Activated naive CD4-positive, alpha-beta T cell treated with anti-CD3 and anti-CD28 coated beads, Interleukin-2, amount 10 ng/mL, durations not matched to agents 7 days and 5 days (primary cell): ENCODE measurements at regions of chr4 and their contacts with region 1.

Region 1: DNA sequence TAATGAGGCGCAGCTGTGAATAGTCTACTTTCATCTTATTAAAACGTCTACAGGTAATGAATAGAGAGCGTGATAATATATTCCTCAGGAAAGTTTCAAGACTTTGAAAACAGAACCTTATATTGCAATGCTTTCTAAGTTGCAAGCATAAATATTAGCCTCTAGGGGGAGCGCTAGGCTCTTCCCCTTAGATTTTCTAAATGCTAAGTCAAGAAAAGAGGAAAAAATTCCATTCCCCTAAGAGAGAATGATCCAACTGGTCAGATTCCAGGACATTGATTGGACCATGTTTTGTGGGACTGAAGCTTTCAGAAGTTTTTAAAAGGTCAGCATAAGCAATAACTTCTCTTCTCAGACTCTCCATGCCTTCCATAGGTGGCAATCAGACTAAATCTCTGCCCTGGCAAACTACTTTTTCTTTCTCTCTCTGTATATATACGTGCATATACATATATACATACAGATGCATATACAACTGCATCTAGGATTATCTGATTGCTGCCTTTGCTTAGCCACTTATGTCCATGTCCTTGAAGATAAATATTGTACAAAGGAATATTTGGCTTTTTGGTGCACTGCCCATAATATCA is 492.9 kb downstream of the INPP4B start:
- DNase-seq: no peak
- H3K4me3 Mint-ChIP-seq: peak overlapping the region; percentile 35
- H3K27ac Mint-ChIP-seq: peak overlapping the region; percentile 77
- H3K4me1 Mint-ChIP-seq: peaks cover 92% of the 10 kb centered on the region
- H3K27me3 Mint-ChIP-seq: no peaks in the 10 kb centered on the region

Region 2: GRCh38 chr4:141939361-141939760 is 413.9 kb before region 1 on chr4:
- CTCF ChIA-PET with region 1: no interaction called
- DNase-seq: no peak
- H3K4me3 Mint-ChIP-seq: no peak overlapping the region
- H3K27ac Mint-ChIP-seq: no peak overlapping the region
- H3K4me1 Mint-ChIP-seq: no peaks in the 10 kb centered on the region
- H3K27me3 Mint-ChIP-seq: no peaks in the 10 kb centered on the region

Region 3: GRCh38 chr4:142230991-142231390 is 122.3 kb before region 1 on chr4:
- CTCF ChIA-PET with region 1: no interaction called
- DNase-seq: no peak
- H3K4me3 Mint-ChIP-seq: no peak overlapping the region
- H3K27ac Mint-ChIP-seq: peak overlapping the region; percentile 37
- H3K4me1 Mint-ChIP-seq: no peaks in the 10 kb centered on the region
- H3K27me3 Mint-ChIP-seq: no peaks in the 10 kb centered on the region

Region 4: DNA sequence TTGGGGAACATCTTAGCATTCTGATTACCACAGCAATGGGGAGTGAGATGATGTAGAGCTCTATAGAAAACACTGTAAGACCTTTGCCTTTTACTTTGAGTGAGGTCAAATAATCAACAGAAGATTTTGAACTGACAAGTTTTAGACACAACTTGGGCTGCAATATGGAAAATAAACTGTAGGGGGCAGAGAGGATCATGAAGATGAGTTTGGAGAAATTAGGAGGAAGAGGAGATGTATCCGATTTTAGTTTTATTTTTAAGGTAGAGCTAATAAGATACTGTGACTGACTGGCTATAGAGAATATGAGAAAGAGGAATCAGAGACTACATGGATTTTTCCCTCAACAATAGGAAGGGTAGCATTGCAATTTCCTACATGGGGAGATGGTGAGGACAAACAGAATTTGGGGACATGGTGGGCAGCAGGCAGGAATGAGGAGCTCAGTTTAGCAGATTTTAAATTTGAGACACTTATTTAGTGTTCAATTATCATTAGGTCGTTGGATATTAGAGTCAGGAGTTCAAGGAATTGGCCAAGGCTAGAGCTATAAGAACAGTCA is 70.3 kb before region 1 on chr4:
- CTCF ChIA-PET with region 1: interaction called, 18 read pairs
- DNase-seq: peak; percentile 27
- H3K4me3 Mint-ChIP-seq: no peak overlapping the region
- H3K27ac Mint-ChIP-seq: no peak overlapping the region
- H3K4me1 Mint-ChIP-seq: peaks cover 10% of the 10 kb centered on the region
- H3K27me3 Mint-ChIP-seq: no peaks in the 10 kb centered on the region

Region 5: DNA sequence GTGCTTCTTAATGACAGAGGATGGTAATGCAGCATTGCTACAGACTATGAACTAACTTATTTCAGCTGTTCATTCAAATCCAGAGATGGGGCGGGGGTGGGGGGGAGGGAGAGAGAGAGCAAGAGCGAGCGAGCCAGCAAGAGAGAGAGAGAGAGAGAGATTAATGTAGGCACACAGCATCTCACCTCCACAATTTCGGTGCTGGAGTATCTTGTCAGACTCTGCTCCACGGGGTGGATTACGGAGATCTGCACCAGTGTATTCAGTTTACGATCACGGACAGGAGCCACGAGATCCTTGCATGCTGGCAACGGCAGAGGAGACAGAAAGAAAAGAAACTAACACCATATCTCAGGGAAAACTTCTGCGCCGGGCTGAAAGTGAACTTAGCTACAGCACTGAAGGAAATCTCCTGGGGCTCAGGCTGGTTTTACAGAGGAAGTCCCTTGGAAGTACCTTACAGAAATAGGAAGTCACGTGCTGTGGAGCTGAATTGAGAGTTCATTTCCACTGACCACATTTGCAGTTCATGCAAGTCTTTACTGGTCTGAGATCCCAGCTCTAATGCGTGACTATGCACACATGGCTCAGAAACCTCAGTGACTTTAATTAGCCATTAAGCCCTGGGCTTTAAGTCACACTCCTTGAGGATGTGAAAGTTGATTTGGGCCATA is 51.9 kb after region 1 on chr4:
- CTCF ChIA-PET with region 1: interaction called, 39 read pairs
- DNase-seq: peak; percentile 73
- H3K4me3 Mint-ChIP-seq: peak overlapping the region; percentile 97
- H3K27ac Mint-ChIP-seq: peak overlapping the region; percentile 100
- H3K4me1 Mint-ChIP-seq: peaks cover 72% of the 10 kb centered on the region
- H3K27me3 Mint-ChIP-seq: no peaks in the 10 kb centered on the region

Region 6: DNA sequence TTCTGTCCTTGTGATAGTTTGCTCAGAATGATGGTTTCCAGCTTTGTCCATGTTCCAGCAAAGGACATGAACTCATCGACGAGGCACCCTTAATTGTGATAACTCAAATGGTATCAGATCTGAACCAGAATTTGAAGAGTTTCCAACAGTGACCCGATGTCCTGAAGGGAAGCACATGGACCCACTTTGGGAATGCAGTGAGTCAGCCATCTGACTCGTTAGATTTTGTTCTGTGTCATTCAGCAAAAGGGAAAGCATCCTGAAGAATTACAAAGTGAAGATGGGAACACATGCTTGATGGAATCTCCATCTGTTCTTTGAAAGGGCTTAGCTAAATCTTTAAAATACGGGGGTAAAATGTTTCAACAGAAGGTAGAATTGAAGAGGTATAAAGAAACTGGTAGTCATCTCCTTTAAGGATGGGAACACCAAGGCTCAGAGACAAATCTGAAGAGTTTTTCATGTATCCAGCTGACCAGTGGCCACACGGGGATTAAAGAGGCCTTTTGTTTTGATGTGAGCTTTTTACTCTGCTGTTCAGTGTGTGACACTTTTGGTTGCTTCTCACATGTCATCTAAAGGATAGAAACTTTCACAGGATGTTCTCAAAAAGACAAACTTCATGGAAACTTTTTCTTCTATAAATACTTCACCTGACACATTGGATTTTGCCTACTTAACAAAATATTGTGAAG is 99.1 kb after region 1 on chr4:
- CTCF ChIA-PET with region 1: no interaction called
- DNase-seq: no peak
- H3K4me3 Mint-ChIP-seq: no peak overlapping the region
- H3K27ac Mint-ChIP-seq: no peak overlapping the region
- H3K4me1 Mint-ChIP-seq: peaks cover 5% of the 10 kb centered on the region
- H3K27me3 Mint-ChIP-seq: no peaks in the 10 kb centered on the region

Region 7: GRCh38 chr4:142567199-142567598 is 214.0 kb after region 1 on chr4:
- CTCF ChIA-PET with region 1: interaction called, 76 read pairs
- DNase-seq: peak; percentile 63
- H3K4me3 Mint-ChIP-seq: peak overlapping the region; percentile 80
- H3K27ac Mint-ChIP-seq: peak overlapping the region; percentile 90
- H3K4me1 Mint-ChIP-seq: peaks cover 66% of the 10 kb centered on the region
- H3K27me3 Mint-ChIP-seq: no peaks in the 10 kb centered on the region

Region 8: GRCh38 chr4:142719854-142720541 is 366.8 kb after region 1 on chr4:
- CTCF ChIA-PET with region 1: interaction called, 24 read pairs
- DNase-seq: peak; percentile 25
- H3K4me3 Mint-ChIP-seq: no peak overlapping the region
- H3K27ac Mint-ChIP-seq: peak overlapping the region; percentile 55
- H3K4me1 Mint-ChIP-seq: peaks cover 40% of the 10 kb centered on the region
- H3K27me3 Mint-ChIP-seq: no peaks in the 10 kb centered on the region